ENCODE measurements at regions of chr17 and their contacts with region 1.

Region 1: GRCh38 chr17:47941236-47941994 is at the start of gene PNPO:
- DNase-seq: peak; percentile 98
- H3K4me3 Mint-ChIP-seq: peak within 1 kb of the TSS; percentile 91
- H3K27ac Mint-ChIP-seq: peak within 1 kb of the TSS; percentile 85
- H3K4me1 Mint-ChIP-seq: peaks cover 49% of the 10 kb centered on the region
- H3K27me3 Mint-ChIP-seq: no peaks in the 10 kb centered on the region
- total RNA-seq, gene PNPO: 30.9 to 36.5 TPM

Region 2: DNA sequence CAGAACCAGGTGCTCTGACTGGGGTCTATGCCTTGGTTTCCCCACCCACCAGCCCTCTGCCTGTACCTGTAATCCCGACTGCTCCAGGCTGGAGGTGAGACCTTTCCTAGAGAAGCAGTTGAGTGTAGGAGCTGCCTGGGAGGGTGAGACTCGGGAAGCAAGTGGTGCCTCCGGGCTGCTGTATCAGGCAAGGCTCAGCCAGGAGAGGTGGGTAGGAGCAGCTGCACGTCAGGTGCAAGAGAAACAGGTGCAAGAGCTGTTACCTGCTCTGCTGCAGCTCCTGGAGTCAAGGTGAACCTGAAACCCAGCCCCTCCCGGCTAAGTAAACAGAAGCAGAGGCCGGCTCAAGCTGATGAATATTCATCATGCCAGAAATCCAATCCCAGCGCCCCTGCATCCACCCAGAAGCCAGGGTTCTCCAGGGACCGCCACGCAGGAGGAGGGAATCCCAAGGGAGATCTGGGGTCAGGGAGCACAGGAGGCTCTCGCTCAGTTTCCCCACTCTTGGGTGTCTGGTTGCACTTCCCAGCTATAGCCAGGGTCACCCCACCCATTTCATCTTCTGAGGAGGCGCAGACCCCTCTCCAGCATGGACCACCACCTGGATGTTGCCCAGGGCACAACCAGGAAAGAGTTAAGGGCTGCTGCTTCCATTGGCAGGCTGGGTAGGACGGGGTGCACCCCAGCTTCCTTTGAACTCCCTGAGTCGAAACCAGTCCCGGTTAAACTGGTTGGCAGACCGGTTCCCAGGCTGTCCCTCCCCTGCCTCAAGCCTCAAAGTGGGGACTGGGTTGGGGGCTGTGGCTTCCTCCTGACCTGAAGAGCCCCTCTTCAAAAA is 16.4 kb after region 1 on chr17 and contains the start of gene PRR15L:
- CTCF ChIA-PET with region 1: interaction called, 33 read pairs
- POLR2A ChIA-PET with region 1: no interaction called
- DNase-seq: no peak
- H3K4me3 Mint-ChIP-seq: no peak within 1 kb of the TSS
- H3K27ac Mint-ChIP-seq: no peak within 1 kb of the TSS
- H3K4me1 Mint-ChIP-seq: no peaks in the 10 kb centered on the region
- H3K27me3 Mint-ChIP-seq: no peaks in the 10 kb centered on the region
- total RNA-seq, gene PRR15L: not detected